ENCODE measurements at regions of chr6 and their contacts with region 1.

Region 1: DNA sequence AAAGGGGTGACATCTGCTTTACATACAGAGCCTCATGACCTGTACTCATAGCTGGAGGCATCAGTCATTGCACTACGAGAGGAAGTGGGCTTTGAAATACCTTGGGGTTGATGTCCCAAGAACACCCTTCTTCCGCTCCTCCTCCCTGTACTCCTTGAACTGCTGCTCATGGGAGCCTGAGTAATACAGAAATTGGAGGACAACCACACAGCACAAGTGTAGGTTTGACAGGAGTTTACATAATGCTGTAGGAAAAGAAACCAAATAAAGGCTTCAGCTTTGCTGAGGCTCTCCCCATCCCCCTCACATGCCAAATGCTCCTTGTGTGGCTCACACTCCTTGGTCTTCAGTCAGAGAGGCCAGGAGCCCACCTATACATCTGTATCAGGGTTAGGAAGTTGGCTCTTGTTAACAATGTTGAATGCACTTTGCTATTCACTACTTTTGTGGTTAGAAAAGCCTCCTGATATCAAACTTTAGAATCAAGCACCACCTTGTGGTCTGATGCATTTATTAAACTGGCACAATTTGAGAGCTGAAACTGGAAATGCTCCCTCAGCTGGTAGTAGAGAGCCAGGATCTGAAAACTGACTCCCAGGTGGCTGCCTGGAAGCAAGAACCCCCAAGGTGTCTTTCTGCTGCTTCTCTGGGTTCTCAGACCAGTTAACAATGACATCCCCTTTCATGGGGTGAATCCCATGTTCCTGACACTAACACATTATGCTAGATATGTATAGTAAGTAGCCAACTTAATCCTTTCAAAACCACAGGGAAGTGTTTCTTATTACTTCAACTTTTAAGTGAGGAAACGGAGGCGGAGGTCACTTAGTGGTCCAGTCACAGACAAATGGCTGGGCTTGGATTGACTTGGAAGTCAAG is 56.2 kb upstream of the EDN1 start:
- DNase-seq: no peak
- ATAC-seq: peak; percentile 64 to 69
- H3K4me3 ChIP-seq: no peak overlapping the region
- H3K27ac ChIP-seq: no peak overlapping the region
- H3K4me1 ChIP-seq: no peaks in the 10 kb centered on the region
- H3K27me3 ChIP-seq: no peaks in the 10 kb centered on the region

Region 2: GRCh38 chr6:11585426-11586016 is 648.4 kb before region 1 on chr6:
- intact Hi-C with region 1: loop called in 2 of 4 experiments (anchors 5 kb)
- DNase-seq: no peak
- ATAC-seq: no peak
- H3K4me3 ChIP-seq: no peak overlapping the region
- H3K27ac ChIP-seq: no peak overlapping the region
- H3K4me1 ChIP-seq: no peaks in the 10 kb centered on the region
- H3K27me3 ChIP-seq: no peaks in the 10 kb centered on the region

Region 3: DNA sequence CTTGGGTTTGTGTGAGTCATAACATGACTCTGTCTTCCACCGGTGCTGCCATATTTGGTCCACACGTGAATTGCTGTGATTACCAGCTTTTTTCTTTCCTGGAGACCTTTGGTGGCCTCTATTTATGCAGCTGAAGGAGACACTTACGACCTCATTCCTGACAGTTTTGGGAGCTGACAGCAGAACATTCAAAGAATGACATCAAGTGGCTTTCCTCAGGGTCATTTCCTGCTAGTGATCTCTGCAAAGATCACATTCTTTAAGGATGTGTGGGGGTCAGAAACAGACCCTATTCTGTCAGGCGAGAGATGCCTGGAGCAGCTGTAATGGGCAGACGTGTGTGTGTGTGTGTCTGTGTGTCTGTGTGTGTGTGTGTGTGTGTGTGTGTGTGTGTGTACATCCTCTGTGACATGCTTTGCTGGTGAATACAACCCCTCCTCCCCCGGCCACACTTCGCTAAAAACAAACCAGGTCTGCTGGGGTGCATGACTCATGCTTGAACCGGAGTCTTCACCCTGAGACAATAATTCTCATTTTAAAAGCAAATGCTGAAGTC is 580.8 kb before region 1 on chr6:
- intact Hi-C with region 1: loop called (anchors 5 to 10 kb)
- DNase-seq: peak in 1 of 3 donors; percentile 28
- ATAC-seq: peak in 1 of 2 donors; percentile 54
- H3K4me3 ChIP-seq: no peak overlapping the region
- H3K27ac ChIP-seq: peak overlapping the region; percentile 16
- H3K4me1 ChIP-seq: no peaks in the 10 kb centered on the region
- H3K27me3 ChIP-seq: no peaks in the 10 kb centered on the region

Region 4: DNA sequence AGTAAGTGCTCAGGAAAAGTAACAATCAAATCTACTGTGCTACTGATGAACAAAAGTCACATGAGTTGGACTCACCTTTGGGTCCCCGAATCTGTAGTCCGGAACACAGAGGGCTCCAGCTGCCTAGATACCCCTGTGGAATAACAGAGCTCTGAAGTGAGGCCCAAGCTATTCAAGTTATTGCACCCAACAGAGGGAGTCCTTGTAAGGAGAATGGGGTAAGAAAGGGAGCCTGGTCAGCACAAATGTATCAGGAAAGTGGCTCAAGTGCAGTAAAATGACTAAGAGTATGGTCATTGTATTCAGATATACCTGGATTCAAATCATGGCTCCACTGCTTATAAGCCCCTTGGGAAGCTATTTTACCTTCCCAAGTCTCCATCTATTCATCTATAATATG is 77.2 kb after region 1 on chr6:
- intact Hi-C with region 1: no loop called
- DNase-seq: no peak
- ATAC-seq: no peak
- H3K4me3 ChIP-seq: no peak overlapping the region
- H3K27ac ChIP-seq: no peak overlapping the region
- H3K4me1 ChIP-seq: no peaks in the 10 kb centered on the region
- H3K27me3 ChIP-seq: no peaks in the 10 kb centered on the region

Measured in right cardiac atrium (tissue), 5 donors.